Activated B cell treated with CpG ODN at 0.5 μM for 24 hours (primary cell): ENCODE measurements at regions of chr12 and their contacts with region 1.

Region 1: GRCh38 chr12:123232807-123233543 is at the starts of genes MPHOSPH9 and MTRFR:
- DNase-seq: peak; percentile 96
- ATAC-seq: peak; percentile 90
- H3K4me3 Mint-ChIP-seq: peak within 1 kb of the TSS; percentile 98
- H3K27ac Mint-ChIP-seq: peak within 1 kb of the TSS; percentile 98
- H3K4me1 Mint-ChIP-seq: peaks cover 73% of the 10 kb centered on the region
- H3K27me3 Mint-ChIP-seq: peaks cover 3% of the 10 kb centered on the region
- CTCF ChIP-seq: no peak
- total RNA-seq, gene MPHOSPH9: 37.3 and 47.2 TPM in 2 replicates
- total RNA-seq, gene MTRFR: 23.5 and 23.6 TPM in 2 replicates

Region 2: GRCh38 chr12:122459211-122459610 is 773.8 kb before region 1 on chr12:
- CTCF ChIA-PET with region 1: no interaction called
- POLR2A ChIA-PET with region 1: no interaction called
- intact Hi-C with region 1: no loop called
- DNase-seq: no peak
- ATAC-seq: no peak
- H3K4me3 Mint-ChIP-seq: no peak overlapping the region
- H3K27ac Mint-ChIP-seq: no peak overlapping the region
- H3K4me1 Mint-ChIP-seq: peaks cover 4% of the 10 kb centered on the region
- H3K27me3 Mint-ChIP-seq: no peaks in the 10 kb centered on the region
- CTCF ChIP-seq: no peak

Region 3: GRCh38 chr12:122635471-122635870 is 597.5 kb before region 1 on chr12:
- CTCF ChIA-PET with region 1: interaction called, 4 read pairs
- POLR2A ChIA-PET with region 1: no interaction called
- intact Hi-C with region 1: loop called (anchors 5 kb)
- DNase-seq: no peak
- ATAC-seq: no peak
- H3K4me3 Mint-ChIP-seq: no peak overlapping the region
- H3K27ac Mint-ChIP-seq: no peak overlapping the region
- H3K4me1 Mint-ChIP-seq: peaks cover 9% of the 10 kb centered on the region
- H3K27me3 Mint-ChIP-seq: no peaks in the 10 kb centered on the region
- CTCF ChIP-seq: no peak

Region 4: DNA sequence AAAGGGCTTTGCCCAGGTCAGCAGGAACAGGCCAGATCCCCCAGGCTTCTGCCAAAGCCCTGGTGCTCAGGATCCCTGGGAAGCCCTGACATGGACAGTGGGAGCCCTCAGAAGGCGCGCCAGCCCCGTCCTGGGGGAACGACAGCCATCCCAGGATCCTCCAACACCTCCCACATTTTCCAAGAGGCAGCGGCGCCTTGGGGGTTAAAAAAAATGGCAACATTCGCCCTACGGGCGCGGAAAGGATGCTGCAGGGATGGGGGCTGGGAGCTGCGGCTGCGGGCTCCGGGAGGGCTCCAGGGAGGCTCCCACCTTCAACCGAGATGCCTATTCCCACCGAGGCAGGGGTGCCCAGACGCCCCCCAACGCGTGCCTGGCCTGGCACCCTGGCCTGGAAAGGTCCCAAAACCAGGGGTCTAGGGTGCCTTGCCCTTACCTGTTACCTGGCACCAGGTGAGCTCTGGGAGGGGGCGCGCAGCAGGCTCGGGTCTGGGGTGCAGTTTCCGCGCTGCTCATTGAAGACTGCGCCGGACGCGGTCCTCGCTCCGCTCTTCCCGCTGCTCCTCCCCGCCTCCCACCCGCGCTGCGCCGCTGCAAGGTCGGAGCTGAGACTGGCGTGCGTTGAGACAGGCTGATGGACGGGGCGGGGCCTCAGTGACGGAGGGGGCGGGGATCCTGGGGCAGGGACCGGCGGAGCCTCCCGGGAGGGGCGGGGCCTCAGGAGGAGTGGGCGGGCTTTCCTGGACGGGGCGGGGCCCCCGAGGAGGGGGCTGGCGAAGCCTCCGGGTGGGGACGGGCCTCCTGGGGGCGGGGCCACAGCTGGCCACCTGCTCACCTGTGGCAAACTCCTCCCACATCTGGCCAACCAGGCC is 266.9 kb before region 1 on chr12 and contains the start of gene ABCB9:
- CTCF ChIA-PET with region 1: interaction called, 4 read pairs
- POLR2A ChIA-PET with region 1: interaction called, 12 read pairs
- intact Hi-C with region 1: loop called (anchors 1 kb)
- DNase-seq: peak; percentile 88
- ATAC-seq: peak; percentile 99
- H3K4me3 Mint-ChIP-seq: peak within 1 kb of the TSS; percentile 69
- H3K27ac Mint-ChIP-seq: peak within 1 kb of the TSS; percentile 32
- H3K4me1 Mint-ChIP-seq: peaks cover 10% of the 10 kb centered on the region
- H3K27me3 Mint-ChIP-seq: no peaks in the 10 kb centered on the region
- CTCF ChIP-seq: no peak
- total RNA-seq, gene ABCB9: 2.0 and 4.6 TPM in 2 replicates

Region 5: DNA sequence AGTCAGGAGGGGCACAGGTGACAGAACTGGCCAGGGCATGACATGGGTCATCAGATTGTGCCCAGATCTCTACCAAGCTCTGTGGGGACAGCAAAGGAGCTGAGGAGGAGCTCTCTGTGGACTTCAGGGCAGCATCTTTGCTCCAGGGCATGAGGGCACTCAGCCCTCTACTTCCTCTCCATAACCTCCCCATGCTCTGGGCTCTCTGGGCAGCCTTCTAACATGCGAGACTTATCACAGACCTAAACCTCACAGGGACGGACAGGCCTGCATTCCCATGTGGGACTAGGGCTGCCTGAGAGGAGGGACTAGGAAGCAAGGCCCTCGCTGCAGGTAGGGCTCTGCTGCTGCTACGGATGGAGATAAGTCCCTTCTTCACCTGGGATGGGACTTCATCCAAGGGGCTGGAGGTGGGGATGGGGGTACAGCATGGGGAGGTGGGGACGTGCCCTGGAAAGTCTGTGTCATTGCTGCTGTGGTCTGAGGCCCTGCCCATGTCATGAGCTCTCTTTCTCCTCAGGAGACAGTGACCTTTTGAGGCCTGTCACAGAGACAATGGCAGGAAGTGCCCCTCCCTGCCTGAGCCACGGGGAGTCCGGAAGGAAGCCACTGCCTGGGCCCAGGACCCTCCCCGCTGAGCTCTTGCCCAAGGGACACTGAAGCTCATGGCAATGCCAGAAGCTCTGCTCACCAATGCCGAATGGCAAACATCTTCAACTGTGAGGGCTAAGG is 126.2 kb before region 1 on chr12:
- CTCF ChIA-PET with region 1: interaction called, 3 read pairs
- POLR2A ChIA-PET with region 1: interaction called, 10 read pairs
- intact Hi-C with region 1: no loop called
- DNase-seq: peak; percentile 32
- ATAC-seq: peak; percentile 94
- H3K4me3 Mint-ChIP-seq: peak overlapping the region; percentile 61
- H3K27ac Mint-ChIP-seq: peak overlapping the region; percentile 89
- H3K4me1 Mint-ChIP-seq: peaks cover 36% of the 10 kb centered on the region
- H3K27me3 Mint-ChIP-seq: no peaks in the 10 kb centered on the region
- CTCF ChIP-seq: no peak

Region 6: GRCh38 chr12:123278101-123278627 is 45.2 kb after region 1 on chr12:
- CTCF ChIA-PET with region 1: no interaction called
- POLR2A ChIA-PET with region 1: interaction called, 10 read pairs
- intact Hi-C with region 1: no loop called
- DNase-seq: no peak
- ATAC-seq: peak; percentile 84
- H3K4me3 Mint-ChIP-seq: no peak overlapping the region
- H3K27ac Mint-ChIP-seq: peak overlapping the region; percentile 67
- H3K4me1 Mint-ChIP-seq: peaks cover 7% of the 10 kb centered on the region
- H3K27me3 Mint-ChIP-seq: no peaks in the 10 kb centered on the region
- CTCF ChIP-seq: no peak

Region 7: GRCh38 chr12:123329799-123330198 is 96.8 kb after region 1 on chr12:
- CTCF ChIA-PET with region 1: no interaction called
- POLR2A ChIA-PET with region 1: no interaction called
- intact Hi-C with region 1: no loop called
- DNase-seq: no peak
- ATAC-seq: no peak
- H3K4me3 Mint-ChIP-seq: no peak overlapping the region
- H3K27ac Mint-ChIP-seq: no peak overlapping the region
- H3K4me1 Mint-ChIP-seq: no peaks in the 10 kb centered on the region
- H3K27me3 Mint-ChIP-seq: no peaks in the 10 kb centered on the region
- CTCF ChIP-seq: no peak

Region 8: DNA sequence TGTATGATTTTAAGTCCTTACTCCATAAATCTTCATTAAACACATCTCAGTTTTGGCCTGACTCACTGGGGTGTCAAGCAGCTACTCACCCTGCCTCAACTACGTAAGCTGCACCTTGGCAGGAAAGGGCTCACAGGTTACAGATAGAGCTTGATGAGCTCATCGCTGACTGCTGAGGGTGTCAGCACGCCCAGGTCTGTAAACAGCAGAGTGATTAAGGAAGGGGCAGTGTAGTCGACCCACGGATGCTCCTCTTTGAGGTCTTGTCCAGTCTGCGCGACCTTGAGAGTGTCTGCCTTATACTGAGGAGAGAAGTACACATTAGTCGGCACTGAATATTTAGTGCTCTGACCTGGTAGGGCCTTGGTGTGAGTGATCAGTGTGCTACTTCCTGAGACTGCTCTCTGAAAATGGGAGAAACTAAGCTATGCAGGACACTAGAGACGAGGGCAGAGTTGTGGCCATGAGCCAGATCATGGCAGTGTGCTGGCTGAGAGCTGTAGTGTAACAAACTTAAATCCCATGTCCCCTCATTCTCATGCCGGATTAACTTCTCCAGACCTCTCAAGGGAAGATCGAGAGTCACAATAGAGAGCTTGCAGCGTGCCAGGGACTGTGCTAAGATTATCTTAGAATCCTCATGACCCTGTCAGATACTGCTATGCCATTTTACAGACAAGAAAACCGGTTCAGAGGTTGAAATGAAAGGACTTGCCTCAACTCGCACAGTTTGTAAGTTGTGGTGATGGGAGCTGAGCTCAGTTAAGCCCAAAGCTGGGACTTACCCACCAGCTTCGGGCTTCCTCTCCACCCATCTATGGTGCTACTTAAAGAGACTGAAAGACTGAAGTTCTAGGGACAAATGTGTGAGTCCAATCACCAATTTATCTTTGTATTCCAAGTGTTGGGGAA is 388.9 kb after region 1 on chr12:
- CTCF ChIA-PET with region 1: no interaction called
- POLR2A ChIA-PET with region 1: no interaction called
- intact Hi-C with region 1: no loop called
- DNase-seq: no peak
- ATAC-seq: no peak
- H3K4me3 Mint-ChIP-seq: no peak overlapping the region
- H3K27ac Mint-ChIP-seq: no peak overlapping the region
- H3K4me1 Mint-ChIP-seq: no peaks in the 10 kb centered on the region
- H3K27me3 Mint-ChIP-seq: no peaks in the 10 kb centered on the region
- CTCF ChIP-seq: no peak

Region 9: GRCh38 chr12:123713398-123713797 is 480.4 kb after region 1 on chr12:
- CTCF ChIA-PET with region 1: no interaction called
- POLR2A ChIA-PET with region 1: interaction called, 10 read pairs
- intact Hi-C with region 1: no loop called
- DNase-seq: no peak
- ATAC-seq: no peak
- H3K4me3 Mint-ChIP-seq: peak overlapping the region; percentile 92
- H3K27ac Mint-ChIP-seq: peak overlapping the region; percentile 80
- H3K4me1 Mint-ChIP-seq: peaks cover 37% of the 10 kb centered on the region
- H3K27me3 Mint-ChIP-seq: no peaks in the 10 kb centered on the region
- CTCF ChIP-seq: no peak